ENCODE measurements at regions of chr2 and their contacts with region 1.

Region 1: DNA sequence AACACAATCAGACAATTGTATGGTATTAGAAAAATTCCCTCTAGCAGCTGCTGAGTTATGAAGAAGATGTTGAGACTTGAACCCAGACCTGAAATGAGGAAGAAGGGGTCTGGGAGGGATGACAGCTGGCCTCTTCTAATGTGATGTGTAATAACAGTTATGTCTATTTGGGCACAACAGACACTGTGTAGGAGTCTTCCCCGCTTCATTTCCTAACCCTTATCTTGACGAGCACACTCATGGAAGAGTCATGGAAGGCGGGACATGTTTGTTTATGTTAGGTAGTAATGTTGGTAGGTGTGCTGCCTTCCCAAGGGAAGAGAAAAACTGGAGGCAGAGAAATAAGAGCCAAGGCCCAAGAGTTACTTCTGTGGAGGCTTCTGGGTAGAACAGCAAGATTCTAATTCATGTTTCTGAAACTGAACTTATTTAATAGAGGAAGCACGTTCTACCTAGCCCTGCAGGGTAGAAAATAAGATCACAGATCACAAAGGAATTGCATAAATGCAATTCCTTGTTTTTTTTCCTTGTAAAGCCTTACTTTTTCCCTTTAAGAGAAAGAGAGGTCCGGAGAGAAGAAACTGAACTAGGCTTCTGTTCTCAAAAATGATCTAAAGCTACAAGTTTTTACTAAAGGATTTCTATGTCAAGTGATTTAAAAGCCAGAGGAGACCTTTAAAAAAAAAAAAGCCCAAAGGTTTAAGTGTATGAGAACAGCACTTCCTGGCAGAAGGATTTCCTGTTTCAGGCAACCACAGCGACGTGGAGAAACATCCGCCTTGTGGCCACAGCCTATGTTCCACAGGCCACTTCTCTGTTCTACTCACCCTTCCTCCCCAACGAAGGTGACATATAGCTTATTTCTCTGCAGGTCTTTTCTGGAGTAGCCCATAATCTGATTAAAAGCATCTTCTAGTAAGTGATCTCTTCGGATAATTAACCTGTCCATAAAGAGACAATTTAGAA is 68.5 kb upstream of the STK17B start:
- DNase-seq: peak; percentile 79
- H3K4me3 ChIP-seq: no peak overlapping the region
- H3K27ac ChIP-seq: peak overlapping the region; percentile 61 to 84 (median 66)
- H3K4me1 ChIP-seq: peaks cover 0 to 22% (median 0%) of the 10 kb centered on the region in 4 donors
- H3K27me3 ChIP-seq: no peaks in the 10 kb centered on the region
- CTCF ChIP-seq: peak in 2 of 5 experiments; percentile 19 to 20
- EP300 ChIP-seq: no peak
- POLR2A ChIP-seq: no peak

Region 2: GRCh38 chr2:194602750-194603149 is 1637.2 kb before region 1 on chr2:
- in situ Hi-C with region 1: no loop called
- intact Hi-C with region 1: loop called (anchors 5 kb)
- DNase-seq: no peak
- H3K4me3 ChIP-seq: no peak overlapping the region
- H3K27ac ChIP-seq: no peak overlapping the region
- H3K4me1 ChIP-seq: no peaks in the 10 kb centered on the region
- H3K27me3 ChIP-seq: no peaks in the 10 kb centered on the region
- CTCF ChIP-seq: no peak
- EP300 ChIP-seq: no peak
- POLR2A ChIP-seq: no peak

Measured in transverse colon (tissue), 4 donors.